CD8-positive, alpha-beta T cell (primary cell): ENCODE measurements at regions of chr12 and their contacts with region 1.

Region 1: DNA sequence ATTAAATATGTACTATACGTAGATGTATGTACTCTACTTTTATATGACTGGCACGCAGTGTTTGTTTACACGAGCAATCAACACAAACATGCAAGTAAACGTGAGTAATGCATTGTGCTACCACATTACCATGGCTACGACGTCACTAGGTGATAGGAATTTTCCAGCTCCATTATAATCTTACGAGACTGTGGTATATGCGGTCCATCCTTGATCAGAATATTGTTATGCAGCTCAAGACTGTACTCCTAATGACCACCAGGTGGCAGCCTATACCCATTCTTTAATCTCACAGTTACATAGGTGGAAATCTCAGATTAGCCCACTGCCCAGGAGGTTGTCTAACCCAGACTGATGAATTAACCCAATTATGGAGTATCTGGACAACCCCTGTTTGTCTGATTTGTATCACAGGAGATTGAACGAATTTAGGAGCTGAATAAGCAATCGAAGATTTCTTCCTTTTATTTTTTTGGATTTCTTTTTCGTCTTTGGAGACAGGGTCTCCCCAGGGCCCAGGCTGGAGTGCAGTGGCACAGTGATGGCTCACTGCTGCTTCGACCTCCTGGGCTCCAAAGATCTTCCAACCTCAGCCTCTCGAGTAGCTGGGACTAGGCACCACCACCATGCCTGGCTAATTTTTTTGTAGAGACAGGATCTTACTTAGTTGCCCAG is 8.7 kb upstream of the TESPA1 start:
- DNase-seq: peak in 7 of 9 experiments; percentile 32 to 89 (median 59)
- ATAC-seq: peak; percentile 72
- H3K4me3 ChIP-seq: no peak overlapping the region
- H3K4me3 Mint-ChIP-seq: no peak overlapping the region
- H3K27ac ChIP-seq: no peak overlapping the region
- H3K27ac Mint-ChIP-seq: no peak overlapping the region
- H3K4me1 ChIP-seq: peaks cover 48% of the 10 kb centered on the region
- H3K4me1 Mint-ChIP-seq: peaks cover 49% of the 10 kb centered on the region
- H3K27me3 ChIP-seq: no peaks in the 10 kb centered on the region
- H3K27me3 Mint-ChIP-seq: no peaks in the 10 kb centered on the region
- CTCF ChIP-seq: peak; percentile 93

Region 2: GRCh38 chr12:54723379-54724256 is 269.7 kb before region 1 on chr12:
- CTCF ChIA-PET with region 1: interaction called, 14 read pairs
- POLR2A ChIA-PET with region 1: no interaction called
- intact Hi-C with region 1: no loop called
- DNase-seq: peak in 5 of 9 experiments; percentile 10 to 70 (median 26)
- ATAC-seq: peak; percentile 72
- H3K4me3 ChIP-seq: no peak overlapping the region
- H3K4me3 Mint-ChIP-seq: no peak overlapping the region
- H3K27ac ChIP-seq: no peak overlapping the region
- H3K27ac Mint-ChIP-seq: no peak overlapping the region
- H3K4me1 ChIP-seq: peaks cover 10% of the 10 kb centered on the region
- H3K4me1 Mint-ChIP-seq: peaks cover 18% of the 10 kb centered on the region
- H3K27me3 ChIP-seq: no peaks in the 10 kb centered on the region
- H3K27me3 Mint-ChIP-seq: peaks cover 6% of the 10 kb centered on the region
- CTCF ChIP-seq: peak; percentile 67

Region 3: GRCh38 chr12:54759751-54760150 is 233.5 kb before region 1 on chr12:
- CTCF ChIA-PET with region 1: interaction called, 11 read pairs
- POLR2A ChIA-PET with region 1: no interaction called
- intact Hi-C with region 1: no loop called
- DNase-seq: peak in 2 of 9 experiments; percentile 24 to 48
- ATAC-seq: no peak
- H3K4me3 ChIP-seq: no peak overlapping the region
- H3K4me3 Mint-ChIP-seq: no peak overlapping the region
- H3K27ac ChIP-seq: no peak overlapping the region
- H3K27ac Mint-ChIP-seq: no peak overlapping the region
- H3K4me1 ChIP-seq: no peaks in the 10 kb centered on the region
- H3K4me1 Mint-ChIP-seq: peaks cover 9% of the 10 kb centered on the region
- H3K27me3 ChIP-seq: no peaks in the 10 kb centered on the region
- H3K27me3 Mint-ChIP-seq: no peaks in the 10 kb centered on the region
- CTCF ChIP-seq: no peak

Region 4: DNA sequence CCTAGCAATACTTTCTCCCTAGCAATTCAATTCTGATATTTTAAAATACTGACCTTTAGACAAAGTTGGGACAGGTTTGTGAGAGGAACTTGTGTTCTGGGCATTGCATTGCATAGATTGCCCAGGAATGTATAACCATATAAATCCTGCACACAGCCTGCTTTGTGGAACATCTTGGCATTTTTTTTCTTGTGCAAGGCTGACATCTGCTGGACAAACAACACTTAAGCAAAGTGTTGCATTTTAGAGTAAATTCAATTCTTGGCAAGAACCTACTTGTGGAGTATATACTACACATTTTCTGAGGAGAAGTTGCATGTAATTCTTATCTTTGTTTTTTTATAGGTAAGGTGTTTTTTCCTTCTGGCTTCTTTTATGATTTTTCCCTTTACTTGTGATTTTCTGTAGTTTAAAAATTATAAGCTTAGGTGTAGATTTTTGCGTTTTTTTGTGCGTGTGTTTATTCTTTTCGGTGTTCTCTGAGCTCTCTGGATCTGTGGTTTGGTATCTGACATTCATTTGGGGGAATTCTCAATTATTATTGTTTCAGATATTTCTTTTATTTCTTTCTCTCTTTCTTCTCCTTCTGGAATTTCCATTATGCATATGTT is 35.1 kb before region 1 on chr12:
- CTCF ChIA-PET with region 1: interaction called, 21 read pairs
- POLR2A ChIA-PET with region 1: no interaction called
- intact Hi-C with region 1: loop called (anchors 5 kb)
- DNase-seq: peak; percentile 4 to 78 (median 48)
- ATAC-seq: peak; percentile 67
- H3K4me3 ChIP-seq: no peak overlapping the region
- H3K4me3 Mint-ChIP-seq: no peak overlapping the region
- H3K27ac ChIP-seq: no peak overlapping the region
- H3K27ac Mint-ChIP-seq: peak overlapping the region; percentile 52
- H3K4me1 ChIP-seq: peaks cover 75% of the 10 kb centered on the region
- H3K4me1 Mint-ChIP-seq: peaks cover 85% of the 10 kb centered on the region
- H3K27me3 ChIP-seq: no peaks in the 10 kb centered on the region
- H3K27me3 Mint-ChIP-seq: no peaks in the 10 kb centered on the region
- CTCF ChIP-seq: peak; percentile 75

Region 5: DNA sequence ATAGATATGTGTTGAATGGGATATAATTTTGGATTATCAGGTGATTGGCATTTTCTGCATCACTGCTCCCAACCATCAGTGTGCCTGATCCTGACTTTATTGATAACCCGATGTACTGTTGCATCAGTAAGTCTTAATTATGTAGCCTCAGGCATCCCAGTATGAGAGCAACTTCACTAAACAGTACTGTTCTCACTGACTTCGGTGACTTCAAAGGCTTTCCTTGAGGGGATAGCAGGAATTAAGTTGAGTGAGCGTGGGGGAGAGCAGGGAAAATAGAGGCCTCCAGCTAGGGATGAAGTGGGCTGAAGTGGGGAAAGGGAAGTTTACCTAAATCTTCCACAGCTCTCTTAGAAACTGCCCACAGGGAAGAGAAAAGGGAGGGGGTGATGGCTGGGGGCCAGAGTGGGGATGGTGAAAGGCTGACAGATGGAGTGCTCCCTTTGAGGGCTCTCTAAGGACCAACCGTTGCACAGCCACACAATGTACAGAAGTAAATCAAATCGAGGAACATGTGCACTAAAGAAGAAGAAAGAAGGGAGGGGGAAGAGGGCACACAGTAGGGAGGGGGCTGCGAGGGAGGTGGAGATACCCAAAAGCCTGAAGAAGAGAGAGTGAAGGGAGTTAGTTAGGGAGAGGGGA is 15.8 kb after region 1 on chr12:
- CTCF ChIA-PET with region 1: interaction called, 23 read pairs
- POLR2A ChIA-PET with region 1: no interaction called
- intact Hi-C with region 1: no loop called
- DNase-seq: no peak
- ATAC-seq: no peak
- H3K4me3 ChIP-seq: no peak overlapping the region
- H3K4me3 Mint-ChIP-seq: no peak overlapping the region
- H3K27ac ChIP-seq: no peak overlapping the region
- H3K27ac Mint-ChIP-seq: no peak overlapping the region
- H3K4me1 ChIP-seq: no peaks in the 10 kb centered on the region
- H3K4me1 Mint-ChIP-seq: no peaks in the 10 kb centered on the region
- H3K27me3 ChIP-seq: no peaks in the 10 kb centered on the region
- H3K27me3 Mint-ChIP-seq: peaks cover 3% of the 10 kb centered on the region
- CTCF ChIP-seq: no peak

Region 6: GRCh38 chr12:55142669-55143565 is 149.6 kb after region 1 on chr12:
- CTCF ChIA-PET with region 1: interaction called, 5 read pairs
- POLR2A ChIA-PET with region 1: no interaction called
- intact Hi-C with region 1: loop called (anchors 1 to 2 kb)
- DNase-seq: peak; percentile 6 to 65 (median 42)
- ATAC-seq: no peak
- H3K4me3 ChIP-seq: no peak overlapping the region
- H3K4me3 Mint-ChIP-seq: no peak overlapping the region
- H3K27ac ChIP-seq: no peak overlapping the region
- H3K27ac Mint-ChIP-seq: no peak overlapping the region
- H3K4me1 ChIP-seq: peaks cover 3% of the 10 kb centered on the region
- H3K4me1 Mint-ChIP-seq: peaks cover 5% of the 10 kb centered on the region
- H3K27me3 ChIP-seq: no peaks in the 10 kb centered on the region
- H3K27me3 Mint-ChIP-seq: peaks cover 5% of the 10 kb centered on the region
- CTCF ChIP-seq: peak; percentile 81